ENCODE measurements at regions of chr12 and their contacts with region 1.

Region 1: GRCh38 chr12:89288959-89289358 is 63.3 kb downstream of the DUSP6 start:
- DNase-seq: no peak
- ATAC-seq: no peak

Region 2: DNA sequence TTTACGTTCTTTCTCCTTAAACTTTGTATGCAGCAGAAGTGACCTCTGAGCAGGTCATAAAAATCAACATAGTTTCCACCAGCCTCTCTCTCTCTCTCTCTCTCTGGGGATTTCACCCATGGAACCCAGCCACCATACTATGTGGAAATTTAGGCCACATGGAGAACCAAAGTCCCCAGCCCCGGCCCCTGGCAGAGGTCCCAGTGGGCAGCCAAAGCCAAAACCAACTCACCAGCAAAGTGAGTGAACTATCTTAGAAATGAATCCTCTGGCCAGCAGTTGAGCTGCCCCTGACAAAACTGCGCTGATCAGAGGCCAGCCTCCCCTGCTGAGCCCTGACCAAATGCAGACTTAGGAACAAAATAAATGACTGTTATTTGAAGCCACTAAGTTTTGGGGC is 54.2 kb after region 1 on chr12:
- intact Hi-C with region 1: loop called (anchors 5 kb)
- DNase-seq: peak; percentile 84
- ATAC-seq: peak; percentile 34

Measured in Right ventricle myocardium superior (tissue), 1 donor.